Gastrocnemius medialis (tissue), 4 donors: ENCODE measurements at regions of chr6 and their contacts with region 1.

Region 1: GRCh38 chr6:30678964-30679726 is 6.3 kb upstream of the DHX16 start:
- DNase-seq: peak; percentile 68 to 79
- ATAC-seq: peak; percentile 76 to 83
- H3K4me3 ChIP-seq: peak overlapping the region in 1 of 4 donors; percentile 7
- H3K27ac ChIP-seq: peak overlapping the region in 3 of 4 donors; percentile 25 to 51 (median 38)
- H3K4me1 ChIP-seq: peaks cover 15 to 18% of the 10 kb centered on the region in 2 donors
- H3K27me3 ChIP-seq: no peaks in the 10 kb centered on the region
- CTCF ChIP-seq: peak; percentile 94 to 98 (median 98)
- POLR2A ChIP-seq: no peak

Region 2: DNA sequence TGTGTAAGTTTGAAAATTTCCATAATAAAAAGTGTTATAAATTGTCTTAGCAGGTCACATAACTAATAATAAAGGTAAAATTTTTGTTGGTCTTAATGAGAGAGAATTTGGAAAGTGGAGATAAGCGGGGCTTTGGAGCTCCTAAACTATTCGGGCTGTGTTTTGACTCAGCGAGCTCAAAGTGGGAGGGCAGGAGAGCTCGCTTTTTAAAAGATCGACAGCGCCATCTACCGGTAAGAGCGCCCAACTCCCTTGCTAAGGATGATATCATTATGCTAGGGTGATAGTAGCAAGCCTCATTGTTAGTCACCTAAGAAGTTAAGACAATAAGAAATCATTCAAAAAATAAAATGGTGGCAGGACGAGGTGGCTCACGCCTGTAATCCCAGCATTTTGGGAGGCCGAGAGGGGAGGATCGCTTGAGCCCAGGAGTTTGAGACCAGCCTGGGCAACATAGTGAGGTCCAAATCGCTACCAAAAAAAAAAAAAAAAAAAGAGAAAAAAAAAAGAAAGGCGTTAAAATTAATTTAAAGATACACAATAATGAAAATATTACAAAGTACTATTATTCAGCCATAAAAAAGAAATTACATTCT is 408.4 kb after region 1 on chr6:
- in situ Hi-C with region 1: loop called in 1 of 4 experiments (anchors 25 kb)
- intact Hi-C with region 1: loop called (anchors 5 kb)
- DNase-seq: peak; percentile 59 to 73
- ATAC-seq: peak; percentile 93 to 99
- H3K4me3 ChIP-seq: peak overlapping the region in 3 of 4 donors; percentile 11 to 36 (median 13)
- H3K27ac ChIP-seq: peak overlapping the region in 3 of 4 donors; percentile 1 to 36 (median 25)
- H3K4me1 ChIP-seq: peaks cover 8 to 9% of the 10 kb centered on the region in 2 donors
- H3K27me3 ChIP-seq: no peaks in the 10 kb centered on the region
- CTCF ChIP-seq: peak; percentile 74 to 82 (median 81)
- POLR2A ChIP-seq: no peak